Activated T-helper 2 cell treated with anti-CD3 and anti-CD28 coated beads, Interferon-gamma antibody, Interleukin-2, Interleukin-4, amounts not matched to agents 10 μg/mL and 5 μg/mL and 100 μg/mL, durations not matched to agents 14 hours and 24 hours and 36 hours (primary cell): ENCODE measurements at regions of chr6 and their contacts with region 1.

Region 1: DNA sequence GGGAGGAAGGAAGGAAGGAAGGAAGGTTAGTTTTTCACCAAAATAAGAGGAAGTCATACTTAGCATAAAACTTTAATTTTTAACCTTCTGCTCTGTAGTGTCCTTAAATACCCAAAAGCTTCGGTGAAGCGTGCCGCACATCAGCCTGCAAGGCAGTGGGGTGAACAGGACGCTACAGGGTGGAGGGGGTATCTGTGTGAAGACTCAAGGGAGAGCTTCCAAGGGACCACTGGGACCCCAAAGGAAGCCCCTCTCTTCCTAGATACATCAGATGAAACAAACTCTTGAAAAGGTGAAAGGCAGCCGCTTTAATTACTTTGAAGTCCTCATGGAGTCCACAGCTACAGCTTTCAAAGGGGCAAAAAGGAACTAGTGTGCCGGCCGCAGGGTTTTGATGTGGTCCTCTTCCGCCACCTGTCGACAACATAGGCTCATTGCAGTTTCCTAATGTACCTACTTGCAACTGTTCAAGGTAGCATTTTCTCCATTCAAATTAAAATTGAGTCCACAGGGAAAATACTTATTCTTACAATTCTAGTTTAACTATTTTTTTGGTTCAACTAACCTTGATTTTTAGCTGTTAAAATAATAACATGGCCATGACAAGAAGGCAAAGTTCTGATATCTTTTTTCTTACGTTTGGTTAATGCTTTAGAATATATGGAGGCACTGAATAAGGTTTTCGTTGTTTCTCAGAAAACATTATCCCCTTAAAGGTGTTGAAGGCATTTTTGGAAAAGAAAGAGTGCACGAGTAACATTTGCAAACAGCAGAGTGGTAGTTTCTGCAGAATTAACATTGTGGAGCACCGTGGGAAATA is 135.0 kb upstream of the RIPOR2 start:
- DNase-seq: peak; percentile 74
- H3K4me3 Mint-ChIP-seq: no peak overlapping the region
- H3K27ac Mint-ChIP-seq: peak overlapping the region; percentile 77
- H3K4me1 Mint-ChIP-seq: peaks cover 8% of the 10 kb centered on the region
- H3K27me3 Mint-ChIP-seq: peaks cover 5% of the 10 kb centered on the region

Region 2: GRCh38 chr6:24774696-24775519 is 295.8 kb before region 1 on chr6 and contains the start of gene GMNN:
- intact Hi-C with region 1: loop called (anchors 10 kb)
- DNase-seq: peak; percentile 95
- H3K4me3 Mint-ChIP-seq: peak within 1 kb of the TSS; percentile 98
- H3K27ac Mint-ChIP-seq: peak within 1 kb of the TSS; percentile 98
- H3K4me1 Mint-ChIP-seq: peaks cover 30% of the 10 kb centered on the region
- H3K27me3 Mint-ChIP-seq: no peaks in the 10 kb centered on the region
- total RNA-seq, gene GMNN: 68.5 and 71.5 TPM in 2 replicates

Region 3: DNA sequence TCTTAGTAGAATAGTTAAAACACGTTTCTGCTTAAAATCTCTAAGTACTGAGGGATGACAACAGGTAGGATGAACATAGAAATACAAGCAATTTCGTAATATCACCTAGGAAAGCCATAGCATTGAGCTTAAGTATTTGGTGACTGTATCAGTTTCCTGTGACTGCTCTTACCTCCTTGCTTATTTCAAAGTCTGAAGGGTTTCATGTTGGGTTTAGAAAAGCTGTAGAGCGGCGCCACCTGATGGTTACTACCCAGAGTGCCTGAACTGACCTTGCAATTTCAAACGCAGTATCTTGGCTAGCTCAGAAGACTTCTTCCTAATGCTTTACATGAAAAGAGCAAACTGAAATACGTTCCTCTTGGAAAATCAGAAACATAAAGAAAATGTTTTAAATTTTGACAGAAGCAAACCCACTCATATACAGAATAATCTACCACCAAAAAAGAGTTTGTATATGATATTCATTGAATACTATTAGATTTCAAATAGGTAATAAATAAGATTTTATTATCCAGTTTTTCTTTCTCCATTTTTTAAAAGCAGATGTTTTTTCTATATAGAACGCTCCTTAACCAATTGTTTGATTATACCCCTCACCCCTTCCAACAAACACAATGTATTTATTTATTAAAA is 52.7 kb before region 1 on chr6:
- intact Hi-C with region 1: loop called (anchors 2 kb)
- DNase-seq: peak; percentile 71
- H3K4me3 Mint-ChIP-seq: no peak overlapping the region
- H3K27ac Mint-ChIP-seq: peak overlapping the region; percentile 68
- H3K4me1 Mint-ChIP-seq: peaks cover 33% of the 10 kb centered on the region
- H3K27me3 Mint-ChIP-seq: no peaks in the 10 kb centered on the region

Region 4: GRCh38 chr6:25042036-25042521 is 28.7 kb before region 1 on chr6:
- intact Hi-C with region 1: loop called (anchors 2 kb)
- DNase-seq: peak; percentile 25
- H3K4me3 Mint-ChIP-seq: peak overlapping the region; percentile 88
- H3K27ac Mint-ChIP-seq: peak overlapping the region; percentile 86
- H3K4me1 Mint-ChIP-seq: peaks cover 51% of the 10 kb centered on the region
- H3K27me3 Mint-ChIP-seq: no peaks in the 10 kb centered on the region